Body of pancreas (tissue), 4 donors: ENCODE measurements at regions of chr6 and their contacts with region 1.

Region 1: GRCh38 chr6:46090115-46091079 is 39.4 kb upstream of the ENPP4 start:
- DNase-seq: peak; percentile 65 to 71 (median 68)
- ATAC-seq: peak; percentile 84
- H3K4me3 ChIP-seq: no peak overlapping the region
- H3K27ac ChIP-seq: no peak overlapping the region
- H3K4me1 ChIP-seq: no peaks in the 10 kb centered on the region
- H3K27me3 ChIP-seq: no peaks in the 10 kb centered on the region
- CTCF ChIP-seq: peak; percentile 55 to 83 (median 77)
- POLR2A ChIP-seq: no peak

Region 2: DNA sequence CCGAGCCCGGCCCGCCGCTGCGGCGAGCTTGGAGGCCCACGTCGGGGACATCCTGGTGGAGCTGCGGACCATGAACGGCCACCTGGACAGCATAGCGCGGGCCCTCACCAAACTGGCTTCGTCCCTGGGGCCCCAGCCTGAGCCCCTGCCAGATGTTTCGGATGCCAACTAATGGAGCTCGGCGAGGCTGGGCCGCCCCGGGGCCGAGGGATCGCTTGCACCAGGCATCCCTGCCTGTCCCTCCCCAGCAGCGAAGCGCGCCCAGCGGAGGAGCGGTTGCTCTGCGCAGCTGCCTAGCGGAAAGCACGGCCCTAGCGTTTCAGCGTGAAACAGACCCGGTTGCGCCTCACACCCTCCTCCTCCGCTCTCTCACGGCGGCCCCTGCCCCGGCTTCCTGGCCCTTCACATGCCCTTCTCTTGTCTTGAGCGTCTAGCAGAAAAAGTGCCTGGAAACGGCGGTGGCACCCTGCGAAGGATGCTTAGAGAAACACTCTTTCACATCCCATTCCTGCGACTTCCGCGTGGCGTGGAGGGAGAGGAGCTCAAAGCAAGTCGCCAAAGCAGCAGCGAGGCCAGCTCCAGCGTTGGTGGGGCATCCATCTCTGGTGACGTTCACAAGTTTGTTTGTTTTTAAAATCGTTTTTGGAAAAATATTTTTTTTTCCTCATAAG is 426.7 kb before region 1 on chr6:
- intact Hi-C with region 1: no loop called
- DNase-seq: no peak
- ATAC-seq: no peak
- H3K4me3 ChIP-seq: no peak overlapping the region
- H3K27ac ChIP-seq: no peak overlapping the region
- H3K4me1 ChIP-seq: peaks cover 10% of the 10 kb centered on the region
- H3K27me3 ChIP-seq: no peaks in the 10 kb centered on the region
- CTCF ChIP-seq: no peak
- POLR2A ChIP-seq: no peak

Region 3: DNA sequence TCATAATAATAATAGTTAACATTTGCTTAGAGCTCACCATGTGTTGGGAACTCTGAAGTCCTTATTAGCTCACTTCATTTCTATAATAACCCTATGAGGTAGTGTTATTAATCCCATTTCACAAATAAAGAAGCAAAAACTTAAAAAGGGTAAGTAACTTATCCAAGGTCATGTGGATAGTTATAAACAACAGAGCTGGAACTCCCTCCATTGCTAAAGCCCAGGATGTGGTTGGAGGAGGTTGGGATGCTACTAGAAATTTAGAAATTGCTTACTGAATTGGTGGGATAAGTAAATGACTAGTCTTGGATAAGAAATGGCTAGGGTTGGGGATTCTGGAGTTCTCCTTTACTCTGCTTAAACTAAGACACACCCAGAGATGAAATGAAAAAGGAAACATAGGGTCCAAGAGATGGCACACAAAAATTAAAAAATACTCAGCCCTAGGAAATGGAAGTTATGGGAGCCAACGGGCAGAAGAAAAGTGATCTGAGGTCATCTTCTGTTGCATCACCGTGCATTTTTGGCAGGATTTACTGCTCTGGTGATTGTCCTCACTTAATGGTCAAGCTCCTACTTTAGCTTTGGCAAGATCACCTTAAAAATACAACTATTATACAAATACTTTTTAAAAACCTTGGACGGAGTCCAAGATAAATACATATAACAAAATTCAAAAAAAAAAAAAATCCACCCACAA is 67.0 kb before region 1 on chr6:
- intact Hi-C with region 1: no loop called
- DNase-seq: peak in 1 of 4 donors; percentile 31
- ATAC-seq: peak; percentile 40
- H3K4me3 ChIP-seq: no peak overlapping the region
- H3K27ac ChIP-seq: no peak overlapping the region
- H3K4me1 ChIP-seq: no peaks in the 10 kb centered on the region
- H3K27me3 ChIP-seq: no peaks in the 10 kb centered on the region
- CTCF ChIP-seq: no peak
- POLR2A ChIP-seq: no peak

Region 4: GRCh38 chr6:46184114-46184513 is 93.7 kb after region 1 on chr6:
- intact Hi-C with region 1: loop called (anchors 10 kb)
- DNase-seq: peak in 3 of 4 donors; percentile 11 to 46 (median 35)
- ATAC-seq: no peak
- H3K4me3 ChIP-seq: no peak overlapping the region
- H3K27ac ChIP-seq: no peak overlapping the region
- H3K4me1 ChIP-seq: no peaks in the 10 kb centered on the region
- H3K27me3 ChIP-seq: no peaks in the 10 kb centered on the region
- CTCF ChIP-seq: no peak
- POLR2A ChIP-seq: no peak

Region 5: DNA sequence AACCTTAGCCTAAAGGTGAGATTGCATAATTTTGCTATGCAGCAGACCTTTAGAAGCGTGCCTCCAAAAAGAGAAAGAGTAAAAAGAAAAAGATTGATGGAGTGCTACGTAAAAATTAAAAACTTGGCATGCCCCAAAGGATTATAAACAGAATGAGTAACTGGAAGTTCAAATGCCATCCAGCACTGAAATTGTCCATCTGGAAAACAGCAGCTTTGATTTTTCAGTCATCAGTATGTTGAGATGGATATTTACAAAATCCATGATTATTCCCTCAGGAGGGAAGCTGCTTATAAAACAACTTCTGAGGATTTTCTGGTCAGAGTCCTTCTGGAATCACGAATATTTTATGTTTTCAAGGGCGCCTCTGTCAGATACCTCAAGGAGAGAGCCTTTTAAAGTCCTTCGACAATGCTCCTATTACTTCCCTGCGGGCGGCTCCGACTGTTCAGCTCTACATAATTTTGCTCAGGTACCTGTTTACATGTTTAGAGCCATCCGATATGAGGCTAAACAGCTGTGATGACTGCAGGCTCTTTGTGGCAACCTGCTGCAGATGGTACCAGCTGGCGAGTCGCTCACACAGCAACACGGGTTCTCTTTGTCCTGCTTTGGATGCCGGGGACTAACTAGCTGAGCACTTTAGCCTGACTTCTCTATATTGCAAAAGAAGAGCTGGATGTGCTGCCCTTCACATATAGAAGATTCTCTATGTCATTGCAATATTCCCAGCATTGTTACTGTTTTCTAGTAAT is 317.6 kb after region 1 on chr6:
- intact Hi-C with region 1: loop called (anchors 5 kb)
- DNase-seq: no peak
- ATAC-seq: no peak
- H3K4me3 ChIP-seq: no peak overlapping the region
- H3K27ac ChIP-seq: no peak overlapping the region
- H3K4me1 ChIP-seq: peaks cover 5% of the 10 kb centered on the region
- H3K27me3 ChIP-seq: no peaks in the 10 kb centered on the region
- CTCF ChIP-seq: no peak
- POLR2A ChIP-seq: no peak